ENCODE measurements at regions of chr19 and their contacts with region 1.

Region 1: DNA sequence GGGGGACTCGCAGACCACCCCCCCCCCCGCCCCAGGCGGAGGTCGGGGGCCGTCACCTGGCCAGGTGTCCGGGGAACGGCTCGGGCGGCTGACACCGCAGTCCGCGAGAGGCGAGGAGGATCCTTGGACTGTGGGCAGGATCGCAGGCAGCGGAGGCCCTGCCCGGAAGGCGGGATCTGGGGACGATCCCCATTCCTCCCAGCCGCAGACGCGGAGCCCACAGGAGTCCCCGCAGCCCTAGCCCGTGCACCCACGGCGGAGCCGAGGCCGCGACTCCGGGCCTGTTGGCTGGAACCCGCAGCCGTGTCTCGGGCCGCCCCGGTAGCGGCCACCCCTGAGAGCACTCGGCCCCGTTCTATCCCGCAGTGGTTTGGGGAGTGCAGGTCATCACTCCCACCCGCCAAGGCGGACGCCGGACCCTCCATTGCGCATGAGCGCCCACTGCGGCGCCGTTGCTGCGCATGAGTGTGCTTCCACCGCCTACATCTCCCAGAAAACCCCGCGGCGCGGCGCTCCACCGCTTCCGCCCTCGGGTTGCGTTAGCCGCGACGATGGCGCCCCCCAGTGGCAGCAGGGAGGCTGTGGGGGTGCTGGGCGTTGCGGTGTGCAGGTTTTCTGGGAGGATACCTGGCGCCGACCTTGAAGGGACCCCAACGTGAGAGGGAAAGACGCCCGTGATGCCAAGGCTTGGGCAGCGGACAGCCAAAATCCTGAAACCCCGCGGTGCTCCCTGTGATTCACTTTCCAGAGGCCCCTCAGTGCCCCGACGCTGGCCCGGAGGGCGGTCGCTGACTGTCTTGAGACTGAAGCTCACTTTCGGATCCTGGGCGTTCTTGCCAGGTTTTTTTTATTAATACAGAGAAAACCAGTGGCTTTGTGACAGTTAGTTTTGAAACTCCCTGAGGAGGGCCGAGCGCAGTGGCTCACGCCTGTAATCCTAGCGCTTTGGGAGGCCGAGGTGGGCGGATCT is 4.4 kb upstream of the ZNF329 start:
- DNase-seq: peak; percentile 99
- ATAC-seq: peak; percentile 87
- H3K4me3 Mint-ChIP-seq: peak overlapping the region; percentile 71
- H3K27ac Mint-ChIP-seq: peak overlapping the region; percentile 51
- H3K4me1 Mint-ChIP-seq: peaks cover 10% of the 10 kb centered on the region
- H3K27me3 Mint-ChIP-seq: no peaks in the 10 kb centered on the region

Region 2: DNA sequence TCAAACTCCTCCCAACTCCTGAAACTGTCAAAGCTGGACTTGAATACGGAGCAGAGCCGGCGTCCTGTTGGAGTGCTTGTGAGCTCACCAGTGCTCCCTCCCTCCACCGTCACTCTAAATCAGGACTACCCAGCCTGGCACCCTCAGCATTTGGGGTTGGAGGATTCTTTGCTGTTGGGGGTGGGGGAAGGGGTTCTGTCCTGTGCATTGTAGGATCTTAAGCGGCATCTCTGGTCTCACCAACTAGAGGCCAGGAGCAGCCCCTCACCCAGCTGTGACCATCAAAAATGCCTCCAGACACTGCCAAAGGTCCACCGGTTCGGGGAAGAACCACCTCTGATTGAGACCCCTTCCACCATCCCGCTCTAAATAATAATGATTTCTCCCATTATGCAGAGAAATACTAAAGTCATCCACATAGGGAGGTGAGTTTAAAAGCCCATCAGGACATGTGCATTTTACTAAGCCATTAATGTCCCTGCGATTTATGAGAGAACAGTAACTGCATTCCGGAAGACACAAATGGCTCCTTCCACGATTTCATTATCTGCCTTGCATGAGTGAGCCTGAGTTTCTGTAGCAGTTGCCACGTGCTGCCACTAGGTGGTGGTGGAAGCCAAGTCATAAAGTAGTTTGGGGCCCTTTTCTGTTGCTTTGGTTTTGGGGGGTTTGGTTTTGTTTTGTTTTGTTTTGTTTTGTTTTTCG is 1051.2 kb before region 1 on chr19:
- CTCF ChIA-PET with region 1: no interaction called
- POLR2A ChIA-PET with region 1: no interaction called
- intact Hi-C with region 1: loop called (anchors 2 to 5 kb)
- DNase-seq: peak; percentile 74
- ATAC-seq: peak; percentile 83
- H3K4me3 Mint-ChIP-seq: peak overlapping the region; percentile 26
- H3K27ac Mint-ChIP-seq: no peak overlapping the region
- H3K4me1 Mint-ChIP-seq: peaks cover 8% of the 10 kb centered on the region
- H3K27me3 Mint-ChIP-seq: peaks cover 5% of the 10 kb centered on the region

Region 3: GRCh38 chr19:57477191-57478008 is 677.6 kb before region 1 on chr19 and contains the start of gene ZNF772:
- CTCF ChIA-PET with region 1: no interaction called
- POLR2A ChIA-PET with region 1: no interaction called
- intact Hi-C with region 1: loop called in 1 of 2 experiments (anchors 5 kb)
- DNase-seq: peak; percentile 92
- ATAC-seq: peak; percentile 100
- H3K4me3 Mint-ChIP-seq: peak within 1 kb of the TSS; percentile 76
- H3K27ac Mint-ChIP-seq: peak within 1 kb of the TSS; percentile 79
- H3K4me1 Mint-ChIP-seq: peaks cover 17% of the 10 kb centered on the region
- H3K27me3 Mint-ChIP-seq: no peaks in the 10 kb centered on the region
- total RNA-seq, gene ZNF772: 6.5 to 7.5 TPM

Region 4: DNA sequence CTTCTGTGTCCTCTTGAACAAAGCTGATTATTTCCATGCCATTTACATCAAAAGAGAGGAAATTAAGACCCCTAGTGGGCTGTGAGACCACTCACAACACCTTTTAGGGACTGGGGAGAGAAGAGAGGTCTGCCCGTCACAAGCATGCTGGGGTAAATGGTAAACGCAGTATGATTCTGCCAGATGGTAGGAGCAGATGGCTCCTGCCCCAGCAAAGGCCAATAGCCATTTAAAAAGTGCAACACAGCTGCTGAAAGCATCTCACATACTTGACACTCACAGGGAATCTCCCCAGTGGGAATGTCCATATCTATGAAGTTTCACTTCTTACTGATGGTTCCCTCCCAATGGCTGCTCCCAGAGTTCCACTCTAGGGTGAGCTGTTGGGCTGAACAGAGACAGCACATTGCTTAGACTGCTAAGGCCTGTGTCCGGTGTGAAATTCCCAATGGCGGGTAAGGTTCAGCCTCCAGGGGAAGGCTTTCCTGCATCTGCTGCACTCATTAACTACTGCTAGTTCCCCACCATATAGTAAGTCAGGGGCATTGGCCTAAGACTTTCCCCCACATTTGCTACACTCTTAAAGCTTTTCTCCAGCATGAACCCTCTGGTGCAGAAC is 435.0 kb before region 1 on chr19:
- CTCF ChIA-PET with region 1: no interaction called
- POLR2A ChIA-PET with region 1: no interaction called
- intact Hi-C with region 1: loop called in 1 of 2 experiments (anchors 5 kb)
- DNase-seq: no peak
- ATAC-seq: no peak
- H3K4me3 Mint-ChIP-seq: no peak overlapping the region
- H3K27ac Mint-ChIP-seq: no peak overlapping the region
- H3K4me1 Mint-ChIP-seq: peaks cover 4% of the 10 kb centered on the region
- H3K27me3 Mint-ChIP-seq: no peaks in the 10 kb centered on the region

Region 5: DNA sequence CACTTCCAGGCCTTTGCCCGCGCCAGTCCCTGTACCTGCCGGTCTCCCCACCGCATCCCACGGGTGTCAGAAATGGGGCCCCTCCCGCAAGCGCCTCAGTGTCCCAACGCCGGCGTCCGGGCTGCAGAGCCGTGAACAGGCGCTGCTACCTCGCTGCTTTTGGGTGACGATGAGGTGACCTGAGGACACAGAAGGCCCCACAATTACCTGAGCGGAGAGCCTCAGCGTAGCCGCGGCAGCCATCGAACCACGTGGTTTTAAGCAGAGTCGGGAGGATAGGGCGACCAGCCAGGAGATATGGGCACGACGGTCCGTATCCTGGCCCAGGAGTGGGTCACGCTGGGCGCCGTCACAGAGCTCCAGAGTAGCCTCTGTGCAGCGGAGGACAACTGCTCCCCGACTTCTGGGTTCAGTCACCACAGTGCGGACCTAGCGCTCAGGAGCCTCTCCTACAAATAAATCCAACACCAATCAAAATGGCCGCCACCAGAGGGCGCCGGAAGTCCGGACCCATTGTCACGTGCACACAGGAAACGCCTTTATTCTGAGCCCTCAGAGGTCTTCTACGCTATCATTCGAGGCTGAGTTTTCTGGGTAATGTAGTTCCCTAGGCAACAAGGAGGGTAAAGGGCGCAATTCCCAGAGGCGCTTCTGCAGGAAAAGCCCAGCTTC is 266.3 kb before region 1 on chr19 and contains the start of gene ZNF814:
- CTCF ChIA-PET with region 1: no interaction called
- POLR2A ChIA-PET with region 1: no interaction called
- intact Hi-C with region 1: loop called in 1 of 2 experiments (anchors 10 kb)
- DNase-seq: peak; percentile 91
- ATAC-seq: peak; percentile 94
- H3K4me3 Mint-ChIP-seq: peak within 1 kb of the TSS; percentile 96
- H3K27ac Mint-ChIP-seq: peak within 1 kb of the TSS; percentile 92
- H3K4me1 Mint-ChIP-seq: peaks cover 23% of the 10 kb centered on the region
- H3K27me3 Mint-ChIP-seq: no peaks in the 10 kb centered on the region
- total RNA-seq, gene ZNF814: 24.1 to 24.5 TPM

Region 6: DNA sequence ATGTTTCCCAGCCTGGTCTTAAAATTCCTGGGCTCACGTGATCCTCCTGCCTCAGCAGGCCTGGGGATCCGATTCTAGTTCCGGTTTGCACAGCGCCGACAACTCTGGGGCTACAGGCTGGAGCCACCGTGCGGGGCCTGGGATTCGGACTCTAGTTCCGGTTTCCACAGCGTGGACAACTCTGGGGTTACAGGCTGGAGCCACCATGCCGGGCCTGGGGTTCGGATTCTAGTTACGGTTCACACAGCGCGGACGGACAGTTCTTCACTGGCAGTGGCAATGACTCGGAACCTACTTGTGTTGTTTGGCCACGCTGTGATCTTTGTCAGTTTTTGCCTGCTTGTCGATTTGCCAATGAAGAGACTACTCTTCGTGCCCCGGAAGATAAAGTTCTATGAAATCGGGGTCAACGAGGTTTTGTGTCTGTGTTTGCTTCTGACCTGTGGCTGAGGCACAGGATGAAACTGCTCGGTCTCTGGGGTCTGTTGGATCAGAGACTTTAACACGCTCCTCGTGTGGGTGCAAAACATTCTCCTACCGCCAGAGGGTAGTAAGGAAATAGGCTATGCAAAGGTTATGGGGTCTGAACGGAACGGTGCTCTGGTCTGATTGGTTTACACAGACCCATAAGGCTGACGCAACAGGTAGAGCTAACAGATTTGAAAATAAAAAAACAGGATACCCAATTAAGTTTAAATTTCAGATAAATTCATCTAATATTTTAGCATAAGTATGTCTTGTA is 133.3 kb before region 1 on chr19:
- CTCF ChIA-PET with region 1: no interaction called
- POLR2A ChIA-PET with region 1: no interaction called
- intact Hi-C with region 1: loop called (anchors 1 kb)
- DNase-seq: peak; percentile 65
- ATAC-seq: peak; percentile 95
- H3K4me3 Mint-ChIP-seq: no peak overlapping the region
- H3K27ac Mint-ChIP-seq: no peak overlapping the region
- H3K4me1 Mint-ChIP-seq: no peaks in the 10 kb centered on the region
- H3K27me3 Mint-ChIP-seq: no peaks in the 10 kb centered on the region

Measured in activated CD4-positive, alpha-beta T cell treated with anti-CD3 and anti-CD28 coated beads for 36 hours (primary cell).